ENCODE measurements at regions of chr6 and their contacts with region 1.

Region 1: DNA sequence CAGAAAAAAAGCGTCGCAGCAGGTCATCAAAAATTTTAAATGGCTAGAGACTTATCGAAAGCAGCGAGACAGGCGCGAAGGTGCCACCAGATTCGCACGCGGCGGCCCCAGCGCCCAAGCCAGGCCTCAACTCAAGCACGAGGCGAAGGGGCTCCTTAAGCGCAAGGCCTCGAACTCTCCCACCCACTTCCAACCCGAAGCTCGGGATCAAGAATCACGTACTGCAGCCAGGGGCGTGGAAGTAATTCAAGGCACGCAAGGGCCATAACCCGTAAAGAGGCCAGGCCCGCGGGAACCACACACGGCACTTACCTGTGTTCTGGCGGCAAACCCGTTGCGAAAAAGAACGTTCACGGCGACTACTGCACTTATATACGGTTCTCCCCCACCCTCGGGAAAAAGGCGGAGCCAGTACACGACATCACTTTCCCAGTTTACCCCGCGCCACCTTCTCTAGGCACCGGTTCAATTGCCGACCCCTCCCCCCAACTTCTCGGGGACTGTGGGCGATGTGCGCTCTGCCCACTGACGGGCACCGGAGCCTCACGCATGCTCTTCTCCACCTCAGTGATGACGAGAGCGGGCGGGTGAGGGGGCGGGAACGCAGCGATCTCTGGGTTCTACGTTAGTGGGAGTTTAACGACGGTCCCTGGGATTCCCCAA is at the start of gene EEF1A1:
- ATAC-seq: peak; percentile 63 to 92 (median 89)
- H3K4me3 ChIP-seq: peak within 1 kb of the TSS; percentile 77 to 93 (median 86)
- H3K27ac ChIP-seq: peak within 1 kb of the TSS; percentile 98 to 99
- H3K4me1 ChIP-seq: peaks cover 23 to 29% of the 10 kb centered on the region in 2 donors
- total RNA-seq, gene EEF1A1: 9,744 to 15,299 (median 11,254) TPM

Region 2: DNA sequence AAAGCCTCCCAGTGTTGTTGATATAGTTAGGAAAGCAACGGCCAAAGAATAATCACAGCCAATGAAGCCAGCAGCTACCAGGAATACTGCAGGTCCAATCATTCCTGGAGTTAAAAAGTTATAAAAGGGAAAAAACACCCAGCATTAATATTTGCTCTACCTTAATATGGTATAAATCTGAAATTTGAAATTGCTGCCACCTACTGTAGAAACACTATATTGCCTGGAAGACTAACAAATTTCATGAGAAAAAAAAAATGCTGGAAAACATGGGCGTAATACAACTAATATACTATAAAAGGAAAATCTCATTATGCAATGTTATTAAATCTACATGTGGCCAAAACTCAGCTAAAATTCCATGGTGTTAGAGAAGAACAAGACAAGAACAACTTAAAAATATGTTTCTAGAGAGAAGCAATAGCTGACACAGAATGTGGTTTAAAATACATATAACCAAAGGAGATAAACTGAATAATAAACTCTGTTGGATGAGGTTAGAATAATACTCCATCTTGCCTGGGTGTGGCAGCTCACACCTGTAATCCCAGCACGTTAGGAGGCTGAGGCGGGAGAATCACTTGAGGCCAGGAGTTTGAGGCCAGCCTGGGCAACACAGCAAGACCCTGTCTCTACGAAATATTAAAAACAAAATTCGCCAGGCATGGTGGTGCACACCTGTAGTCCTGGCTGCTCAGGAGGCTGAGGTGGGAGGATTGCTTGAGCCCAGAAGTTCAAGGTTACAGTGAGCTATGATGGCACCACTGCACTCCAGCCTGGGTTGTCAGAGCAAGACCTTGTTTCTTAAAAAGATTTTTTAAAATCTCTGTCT is 89.8 kb after region 1 on chr6:
- in situ Hi-C with region 1: loop called in 4 of 9 experiments (anchors 25 kb)
- ATAC-seq: peak in 3 of 8 experiments; percentile 55 to 69 (median 63)
- H3K4me3 ChIP-seq: no peak overlapping the region
- H3K27ac ChIP-seq: no peak overlapping the region
- H3K4me1 ChIP-seq: no peaks in the 10 kb centered on the region

Region 3: GRCh38 chr6:73644941-73645591 is 124.2 kb after region 1 on chr6:
- in situ Hi-C with region 1: loop called in 1 of 9 experiments (anchors 25 kb)
- ATAC-seq: peak; percentile 20 to 55 (median 49)
- H3K4me3 ChIP-seq: peak overlapping the region; percentile 33 to 48 (median 41)
- H3K27ac ChIP-seq: peak overlapping the region in 1 of 2 donors; percentile 34
- H3K4me1 ChIP-seq: peaks cover 0 to 14% of the 10 kb centered on the region in 2 donors